ENCODE measurements at regions of chr4 and their contacts with region 1.

Region 1: GRCh38 chr4:10403633-10404445 is 53.4 kb downstream of the ZNF518B start:
- DNase-seq: peak; percentile 11
- H3K4me3 ChIP-seq: no peak overlapping the region
- H3K27ac ChIP-seq: no peak overlapping the region
- H3K4me1 ChIP-seq: no peaks in the 10 kb centered on the region
- H3K27me3 ChIP-seq: no peaks in the 10 kb centered on the region
- CTCF ChIP-seq: peak; percentile 42 to 70 (median 53)
- EP300 ChIP-seq: no peak
- POLR2A ChIP-seq: no peak

Region 2: GRCh38 chr4:10164877-10165283 is 239.0 kb before region 1 on chr4:
- in situ Hi-C with region 1: loop called (anchors 5 to 10 kb)
- intact Hi-C with region 1: loop called (anchors 5 kb)
- DNase-seq: peak; percentile 55
- H3K4me3 ChIP-seq: no peak overlapping the region
- H3K27ac ChIP-seq: no peak overlapping the region
- H3K4me1 ChIP-seq: peaks cover 0 to 20% (median 7%) of the 10 kb centered on the region in 4 donors
- H3K27me3 ChIP-seq: no peaks in the 10 kb centered on the region
- CTCF ChIP-seq: peak; percentile 57 to 69 (median 64)
- EP300 ChIP-seq: no peak
- POLR2A ChIP-seq: no peak

Measured in transverse colon (tissue), 4 donors.